Heart left ventricle (tissue), 16 donors: ENCODE measurements at regions of chr6 and their contacts with region 1.

Region 1: DNA sequence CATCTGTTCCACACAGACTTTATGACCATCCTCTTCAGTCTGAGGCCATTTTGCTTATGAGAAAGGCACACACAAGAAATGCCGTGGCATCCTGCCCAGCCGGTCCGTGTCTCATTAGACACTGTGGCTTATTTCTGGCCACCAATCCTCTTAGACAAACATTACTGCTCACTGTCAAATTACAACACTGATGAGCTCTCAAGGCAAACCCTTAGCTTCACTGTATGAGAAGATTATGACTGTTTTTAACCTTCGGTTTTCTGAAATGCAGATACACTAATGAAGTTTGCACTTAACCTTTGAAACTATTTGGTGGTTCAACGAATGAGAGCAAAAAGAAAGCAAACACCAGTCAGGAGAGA is 50.5 kb upstream of the DST start:
- DNase-seq: peak; percentile 84 to 95 (median 88)
- ATAC-seq: peak; percentile 85 to 87 (median 86)
- H3K4me3 ChIP-seq: peak overlapping the region in 11 of 12 donors; percentile 23 to 65 (median 51)
- H3K27ac ChIP-seq: peak overlapping the region; percentile 78 to 90 (median 86)
- H3K4me1 ChIP-seq: peaks cover 0 to 43% (median 22%) of the 10 kb centered on the region in 12 donors
- H3K27me3 ChIP-seq: no peaks in the 10 kb centered on the region
- CTCF ChIP-seq: no peak
- POLR2A ChIP-seq: peak in 1 of 2 donors; percentile 33

Region 2: DNA sequence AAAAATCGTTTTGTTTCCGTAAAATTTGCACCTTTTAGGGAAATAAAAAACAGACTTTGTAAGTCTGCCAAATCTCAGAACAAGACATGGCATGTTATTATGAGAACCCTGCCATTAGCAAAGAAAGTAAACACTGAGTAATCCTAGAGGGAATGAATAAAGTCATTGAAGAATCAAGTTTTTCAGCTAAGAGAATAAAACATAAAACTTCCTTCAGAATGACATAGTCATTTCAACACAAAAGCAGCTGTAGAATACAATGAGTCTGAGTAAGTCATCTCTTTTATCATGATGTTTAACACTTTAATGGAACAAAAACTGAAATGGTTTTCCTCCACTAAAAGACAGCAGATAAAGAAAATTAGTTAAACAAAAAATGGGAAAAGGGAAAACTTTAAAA is 40.2 kb before region 1 on chr6:
- intact Hi-C with region 1: loop called in 1 of 10 experiments (anchors 5 kb)
- DNase-seq: no peak
- ATAC-seq: peak in 2 of 4 donors; percentile 41 to 79
- H3K4me3 ChIP-seq: no peak overlapping the region
- H3K27ac ChIP-seq: peak overlapping the region in 3 of 12 donors; percentile 18 to 44 (median 19)
- H3K4me1 ChIP-seq: peaks cover 4 to 66% (median 43%) of the 10 kb centered on the region in 12 donors
- H3K27me3 ChIP-seq: no peaks in the 10 kb centered on the region
- CTCF ChIP-seq: no peak
- POLR2A ChIP-seq: no peak